Ovary (tissue), 10 donors: ENCODE measurements at regions of chr5 and their contacts with region 1.

Region 1: DNA sequence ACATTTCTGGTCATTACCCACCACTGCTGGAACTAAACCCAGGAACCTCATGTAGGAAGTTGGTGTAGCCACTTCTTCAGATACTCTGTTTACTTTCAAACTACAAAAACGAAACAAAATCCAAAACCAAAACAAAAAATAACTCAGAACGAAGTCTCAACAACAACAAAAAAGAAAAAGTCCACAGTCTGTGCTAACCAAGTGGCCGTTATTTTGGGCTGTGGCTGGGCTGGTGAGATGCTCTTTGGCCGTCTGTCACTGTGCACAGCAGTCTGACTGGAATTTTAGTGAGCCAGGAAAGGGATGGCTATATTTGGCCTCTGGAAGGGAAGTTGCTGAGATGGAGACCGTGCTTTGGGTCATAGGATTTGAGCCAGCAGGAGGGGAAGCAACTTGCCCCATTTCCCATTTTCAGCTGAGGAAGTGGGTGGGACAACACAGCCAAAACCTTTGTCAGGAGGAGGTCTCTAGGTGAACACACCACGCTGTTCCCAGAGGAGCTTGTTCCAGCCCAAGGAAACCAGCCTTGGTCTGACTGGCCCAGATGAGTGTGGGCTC is 334.1 kb downstream of the ZSWIM6 start:
- DNase-seq: no peak
- H3K4me3 ChIP-seq: no peak overlapping the region
- H3K27ac ChIP-seq: no peak overlapping the region
- H3K4me1 ChIP-seq: no peaks in the 10 kb centered on the region
- H3K27me3 ChIP-seq: no peaks in the 10 kb centered on the region
- CTCF ChIP-seq: no peak
- EP300 ChIP-seq: no peak
- POLR2A ChIP-seq: no peak

Region 2: DNA sequence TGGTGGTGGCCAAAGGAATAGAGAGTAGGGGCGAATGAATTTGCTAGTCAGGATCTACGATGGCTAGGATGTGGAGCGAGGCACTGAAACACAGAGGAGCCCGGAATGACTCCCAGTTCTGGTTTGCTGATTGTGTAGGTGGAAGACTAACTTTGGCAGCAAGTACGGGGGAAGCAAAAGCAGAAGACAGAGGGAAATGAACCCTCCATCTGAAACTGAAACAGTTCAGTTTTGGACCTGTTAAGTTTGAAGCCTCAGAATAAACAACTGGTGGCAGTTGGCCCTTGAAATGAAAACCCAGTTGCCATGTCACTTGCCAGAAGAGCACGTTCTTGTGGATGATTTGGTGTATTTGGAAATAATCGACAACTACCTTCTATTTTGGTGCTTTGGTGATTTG is 488.4 kb before region 1 on chr5:
- intact Hi-C with region 1: loop called in 1 of 4 experiments (anchors 10 kb)
- DNase-seq: no peak
- H3K4me3 ChIP-seq: no peak overlapping the region
- H3K27ac ChIP-seq: no peak overlapping the region
- H3K4me1 ChIP-seq: no peaks in the 10 kb centered on the region
- H3K27me3 ChIP-seq: no peaks in the 10 kb centered on the region
- CTCF ChIP-seq: no peak
- EP300 ChIP-seq: no peak
- POLR2A ChIP-seq: no peak

Region 3: DNA sequence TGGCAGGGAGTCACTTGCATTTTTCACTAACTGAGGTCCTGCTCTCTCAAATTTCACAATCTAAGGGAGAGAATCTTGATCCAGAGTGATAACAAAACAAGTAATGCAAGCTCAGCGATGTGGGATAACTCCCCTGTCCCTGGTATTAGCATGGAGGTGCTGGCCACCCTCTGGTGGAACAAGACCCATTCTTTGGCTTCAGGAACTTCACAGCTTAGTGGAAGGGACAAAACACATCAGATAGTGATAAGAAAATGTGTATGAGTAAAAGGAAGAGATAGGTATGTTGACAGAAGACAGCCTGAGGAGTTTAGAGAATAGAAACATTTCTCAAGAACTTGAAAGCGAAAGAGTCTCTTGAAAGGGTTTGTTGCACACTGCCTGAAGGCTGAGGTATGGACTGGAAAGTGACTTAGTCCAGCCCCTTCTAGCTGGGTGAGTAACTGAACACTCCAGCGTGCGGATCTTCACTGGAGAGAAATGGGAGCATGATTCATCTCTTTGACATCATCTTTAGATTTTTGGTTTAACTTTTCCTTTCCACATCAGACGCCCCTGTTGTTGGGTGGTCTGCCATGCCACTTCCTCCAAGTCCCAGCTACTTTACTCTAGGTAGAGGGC is 359.5 kb before region 1 on chr5:
- intact Hi-C with region 1: no loop called
- DNase-seq: no peak
- H3K4me3 ChIP-seq: no peak overlapping the region
- H3K27ac ChIP-seq: no peak overlapping the region
- H3K4me1 ChIP-seq: peaks cover 7% of the 10 kb centered on the region
- H3K27me3 ChIP-seq: no peaks in the 10 kb centered on the region
- CTCF ChIP-seq: no peak
- EP300 ChIP-seq: no peak
- POLR2A ChIP-seq: no peak